ENCODE measurements at regions of chr16 and their contacts with region 1.

Region 1: GRCh38 chr16:82248677-82249076 is 78.7 kb upstream of the MPHOSPH6 start:
- DNase-seq: no peak
- H3K4me3 ChIP-seq: no peak overlapping the region
- H3K27ac ChIP-seq: no peak overlapping the region
- H3K4me1 ChIP-seq: no peaks in the 10 kb centered on the region
- H3K27me3 ChIP-seq: no peaks in the 10 kb centered on the region
- CTCF ChIP-seq: no peak
- POLR2A ChIP-seq: no peak

Region 2: DNA sequence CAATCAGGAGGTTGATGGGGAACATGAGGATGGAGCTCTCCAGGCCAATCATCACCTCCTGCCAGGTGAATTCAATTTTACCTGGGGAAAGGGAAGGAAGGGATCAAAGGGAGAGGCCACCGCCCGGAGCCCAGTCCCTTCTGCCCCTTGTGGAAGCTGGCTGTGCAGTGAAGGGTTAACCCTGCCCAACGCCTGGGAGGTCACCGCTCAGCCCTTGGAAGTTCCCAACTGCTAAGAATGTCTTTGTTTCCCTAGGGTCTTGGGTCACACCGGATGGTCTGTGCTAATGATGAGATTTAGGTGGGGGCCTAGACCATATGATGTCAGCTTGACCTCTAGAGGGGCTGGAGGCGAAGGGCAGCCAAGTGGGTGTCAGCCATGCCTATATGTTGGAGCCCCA is 1100.4 kb before region 1 on chr16:
- intact Hi-C with region 1: loop called (anchors 5 kb)
- DNase-seq: no peak
- H3K4me3 ChIP-seq: no peak overlapping the region
- H3K27ac ChIP-seq: no peak overlapping the region
- H3K4me1 ChIP-seq: no peaks in the 10 kb centered on the region
- H3K27me3 ChIP-seq: no peaks in the 10 kb centered on the region
- CTCF ChIP-seq: no peak
- POLR2A ChIP-seq: no peak

Region 3: DNA sequence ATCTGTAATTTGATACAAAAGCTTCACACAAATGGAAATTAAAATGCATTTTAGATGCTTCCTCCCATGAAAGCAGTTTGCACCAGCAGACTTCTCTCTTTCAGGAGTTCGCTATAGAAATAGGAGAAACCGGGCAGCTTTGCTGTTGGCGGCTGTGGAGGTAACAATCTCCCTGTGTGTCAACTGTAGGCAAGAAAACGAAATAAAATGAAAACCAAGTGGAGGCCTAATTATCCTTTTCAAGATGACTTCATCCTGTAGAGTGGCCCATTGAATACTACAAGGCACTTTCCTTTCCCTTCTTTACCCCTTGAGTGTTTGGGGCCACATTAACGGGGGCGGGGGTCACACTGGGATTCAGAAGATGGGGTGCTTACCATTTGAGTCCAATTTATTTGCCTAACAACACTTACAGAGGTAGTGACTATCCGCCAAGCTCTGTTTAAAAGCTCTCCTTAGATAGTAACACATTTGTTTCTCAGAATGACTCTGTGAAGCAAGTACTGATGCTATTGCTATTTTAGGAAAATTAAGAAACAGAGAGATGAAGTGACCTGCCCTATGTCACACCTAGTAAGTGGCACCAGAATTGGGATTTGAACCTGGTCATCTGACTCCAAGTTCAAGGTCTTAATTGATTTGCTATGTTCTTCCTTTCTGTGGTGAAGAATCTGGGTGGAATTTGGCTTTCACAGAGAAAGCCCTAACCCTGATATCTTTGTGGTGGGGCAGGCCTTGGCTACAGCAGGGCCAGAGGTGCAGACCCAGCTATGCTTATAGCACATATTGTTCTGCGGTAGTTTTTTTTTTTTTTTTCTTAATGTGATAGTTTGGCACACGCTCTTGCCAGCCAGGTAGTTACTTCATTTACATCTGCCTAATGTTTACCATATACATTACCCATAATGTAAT is 46.9 kb after region 1 on chr16:
- intact Hi-C with region 1: no loop called
- DNase-seq: peak in 1 of 2 donors; percentile 58
- H3K4me3 ChIP-seq: no peak overlapping the region
- H3K27ac ChIP-seq: no peak overlapping the region
- H3K4me1 ChIP-seq: no peaks in the 10 kb centered on the region
- H3K27me3 ChIP-seq: no peaks in the 10 kb centered on the region
- CTCF ChIP-seq: no peak
- POLR2A ChIP-seq: no peak

Region 4: GRCh38 chr16:83994087-83994486 is 1745.4 kb after region 1 on chr16:
- intact Hi-C with region 1: loop called (anchors 5 kb)
- DNase-seq: no peak
- H3K4me3 ChIP-seq: no peak overlapping the region
- H3K27ac ChIP-seq: no peak overlapping the region
- H3K4me1 ChIP-seq: no peaks in the 10 kb centered on the region
- H3K27me3 ChIP-seq: no peaks in the 10 kb centered on the region
- CTCF ChIP-seq: no peak
- POLR2A ChIP-seq: no peak